ENCODE measurements at regions of chr7 and their contacts with region 1.

Region 1: GRCh38 chr7:134184767-134185166 is 57.6 kb downstream of the LRGUK start:
- DNase-seq: no peak
- ATAC-seq: no peak
- H3K4me3 ChIP-seq: no peak overlapping the region
- H3K4me3 Mint-ChIP-seq: no peak overlapping the region
- H3K27ac ChIP-seq: no peak overlapping the region
- H3K27ac Mint-ChIP-seq: no peak overlapping the region
- H3K4me1 ChIP-seq: no peaks in the 10 kb centered on the region
- H3K4me1 Mint-ChIP-seq: no peaks in the 10 kb centered on the region
- H3K27me3 ChIP-seq: peaks cover 0 to 5% of the 10 kb centered on the region in 2 experiments
- H3K27me3 Mint-ChIP-seq: peaks cover 0 to 2% of the 10 kb centered on the region in 2 donors

Region 2: GRCh38 chr7:134254311-134254710 is 69.5 kb after region 1 on chr7:
- CTCF ChIA-PET with region 1: no interaction called
- POLR2A ChIA-PET with region 1: interaction called in 1 of 2 experiments, 10 read pairs
- DNase-seq: no peak
- ATAC-seq: no peak
- H3K4me3 ChIP-seq: no peak overlapping the region
- H3K4me3 Mint-ChIP-seq: no peak overlapping the region
- H3K27ac ChIP-seq: no peak overlapping the region
- H3K27ac Mint-ChIP-seq: no peak overlapping the region
- H3K4me1 ChIP-seq: no peaks in the 10 kb centered on the region
- H3K4me1 Mint-ChIP-seq: no peaks in the 10 kb centered on the region
- H3K27me3 ChIP-seq: peaks cover 0 to 3% of the 10 kb centered on the region in 2 experiments
- H3K27me3 Mint-ChIP-seq: peaks cover 2 to 8% of the 10 kb centered on the region in 2 donors

Measured in T-cell (primary cell).